Activated CD4-positive, alpha-beta memory T cell treated with anti-CD3 and anti-CD28 coated beads for 36 hours (primary cell): ENCODE measurements at regions of chr22 and their contacts with region 1.

Region 1: DNA sequence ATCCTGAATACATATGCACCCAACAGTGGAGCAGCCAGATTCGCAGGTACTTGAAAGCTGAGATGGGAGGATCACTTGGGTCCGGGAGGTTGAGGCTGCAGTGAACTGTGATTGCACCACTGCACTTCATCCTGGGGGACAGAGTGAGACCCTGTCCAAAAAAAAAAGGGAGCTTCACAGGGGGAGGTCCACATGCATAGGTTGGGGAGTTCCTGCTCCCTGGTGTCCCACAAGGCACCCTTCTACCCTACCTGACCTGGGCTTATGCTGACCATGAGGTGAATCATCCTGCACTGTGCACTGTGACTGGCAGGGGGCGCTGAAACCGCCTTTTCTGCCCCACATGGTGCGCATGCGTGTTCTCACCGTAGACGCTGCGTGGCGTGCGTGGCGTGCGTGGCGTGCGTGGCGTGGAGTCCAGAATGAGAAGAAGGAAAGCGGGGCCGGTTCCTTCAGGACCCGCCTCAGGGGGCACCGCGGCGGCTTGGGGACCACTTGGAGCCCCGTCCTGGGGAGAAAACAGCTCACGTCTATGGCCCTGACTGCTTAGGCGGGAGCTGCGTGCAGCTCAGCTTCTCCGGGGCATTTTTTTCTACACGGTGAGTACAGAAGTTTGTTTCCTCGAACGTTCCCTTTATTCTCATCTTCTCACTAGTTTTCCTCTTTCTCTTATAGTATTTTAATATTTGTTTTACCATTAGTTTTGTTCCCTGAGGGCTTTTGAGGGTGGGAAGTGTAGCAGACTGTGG is 116.6 kb upstream of the GRK3 start:
- DNase-seq: peak; percentile 94
- H3K4me3 Mint-ChIP-seq: peak overlapping the region; percentile 79
- H3K27ac Mint-ChIP-seq: peak overlapping the region; percentile 89
- H3K4me1 Mint-ChIP-seq: peaks cover 41% of the 10 kb centered on the region
- H3K27me3 Mint-ChIP-seq: no peaks in the 10 kb centered on the region

Region 2: GRCh38 chr22:25076336-25076735 is 371.5 kb before region 1 on chr22:
- CTCF ChIA-PET with region 1: no interaction called
- POLR2A ChIA-PET with region 1: no interaction called
- intact Hi-C with region 1: loop called (anchors 5 kb)
- DNase-seq: peak; percentile 85
- H3K4me3 Mint-ChIP-seq: peak overlapping the region; percentile 26
- H3K27ac Mint-ChIP-seq: peak overlapping the region; percentile 80
- H3K4me1 Mint-ChIP-seq: peaks cover 65% of the 10 kb centered on the region
- H3K27me3 Mint-ChIP-seq: no peaks in the 10 kb centered on the region

Region 3: GRCh38 chr22:25404928-25405816 is 42.7 kb before region 1 on chr22:
- CTCF ChIA-PET with region 1: interaction called, 3 read pairs
- POLR2A ChIA-PET with region 1: no interaction called
- intact Hi-C with region 1: loop called (anchors 5 kb)
- DNase-seq: peak; percentile 74
- H3K4me3 Mint-ChIP-seq: peak overlapping the region; percentile 70
- H3K27ac Mint-ChIP-seq: peak overlapping the region; percentile 33
- H3K4me1 Mint-ChIP-seq: peaks cover 18% of the 10 kb centered on the region
- H3K27me3 Mint-ChIP-seq: no peaks in the 10 kb centered on the region

Region 4: DNA sequence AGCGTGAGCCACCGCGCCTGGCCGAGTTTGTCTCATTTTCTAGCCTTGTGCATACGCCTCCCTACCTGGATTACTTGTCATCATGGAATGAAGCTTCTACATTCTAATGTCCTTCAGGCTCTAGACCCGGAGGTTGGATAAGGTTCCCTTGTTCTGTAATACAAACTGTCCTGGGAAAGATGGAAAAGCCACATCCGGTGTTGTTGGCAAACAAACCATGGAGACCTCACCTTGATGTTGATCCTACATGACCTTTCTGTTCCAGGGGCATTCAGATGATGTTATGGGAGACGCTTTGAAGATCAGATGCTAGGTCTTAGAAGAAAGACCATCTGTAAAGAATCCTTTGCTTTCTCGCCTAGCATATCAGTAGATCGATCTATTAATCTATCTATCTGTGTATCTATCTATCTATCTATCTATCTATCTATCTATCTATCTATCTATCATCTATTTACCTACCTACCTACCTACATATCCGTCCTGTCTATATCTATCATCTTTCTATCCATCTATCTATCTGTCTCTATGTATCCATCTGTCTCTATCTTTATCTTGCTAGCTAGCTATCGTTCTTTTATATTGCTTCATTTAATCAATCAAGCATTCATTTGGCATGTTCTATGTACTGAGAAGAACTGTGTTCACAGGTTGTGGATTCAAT is 70.3 kb after region 1 on chr22:
- CTCF ChIA-PET with region 1: no interaction called
- POLR2A ChIA-PET with region 1: no interaction called
- intact Hi-C with region 1: no loop called
- DNase-seq: no peak
- H3K4me3 Mint-ChIP-seq: no peak overlapping the region
- H3K27ac Mint-ChIP-seq: no peak overlapping the region
- H3K4me1 Mint-ChIP-seq: no peaks in the 10 kb centered on the region
- H3K27me3 Mint-ChIP-seq: no peaks in the 10 kb centered on the region

Region 5: DNA sequence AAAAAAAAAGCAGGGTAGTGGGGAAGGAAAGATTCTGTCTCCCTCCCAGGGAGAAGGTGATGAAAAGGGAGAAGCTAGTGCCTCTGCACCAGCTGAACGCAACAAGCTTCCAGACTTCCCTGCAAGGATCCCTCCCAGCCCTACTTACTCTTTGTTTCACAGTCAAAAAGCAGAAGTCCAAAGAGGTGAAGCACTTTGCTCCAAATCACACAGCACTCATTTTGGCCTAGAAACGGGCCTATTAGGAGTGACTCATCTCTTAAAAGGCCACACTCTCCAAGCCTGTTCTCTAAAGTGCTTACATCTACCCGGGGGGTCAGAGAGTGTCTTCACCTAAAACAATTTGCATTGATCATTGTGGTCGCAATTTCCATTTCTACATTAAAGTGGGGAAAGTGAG is 98.9 kb after region 1 on chr22:
- CTCF ChIA-PET with region 1: no interaction called
- POLR2A ChIA-PET with region 1: no interaction called
- intact Hi-C with region 1: no loop called
- DNase-seq: no peak
- H3K4me3 Mint-ChIP-seq: no peak overlapping the region
- H3K27ac Mint-ChIP-seq: no peak overlapping the region
- H3K4me1 Mint-ChIP-seq: no peaks in the 10 kb centered on the region
- H3K27me3 Mint-ChIP-seq: no peaks in the 10 kb centered on the region

Region 6: GRCh38 chr22:25702040-25702439 is 254.2 kb after region 1 on chr22:
- CTCF ChIA-PET with region 1: interaction called, 3 read pairs
- POLR2A ChIA-PET with region 1: no interaction called
- intact Hi-C with region 1: loop called (anchors 5 kb)
- DNase-seq: no peak
- H3K4me3 Mint-ChIP-seq: no peak overlapping the region
- H3K27ac Mint-ChIP-seq: no peak overlapping the region
- H3K4me1 Mint-ChIP-seq: peaks cover 13% of the 10 kb centered on the region
- H3K27me3 Mint-ChIP-seq: no peaks in the 10 kb centered on the region

Region 7: GRCh38 chr22:25772288-25772687 is 324.4 kb after region 1 on chr22:
- CTCF ChIA-PET with region 1: interaction called, 13 read pairs
- POLR2A ChIA-PET with region 1: no interaction called
- intact Hi-C with region 1: loop called (anchors 5 kb)
- DNase-seq: no peak
- H3K4me3 Mint-ChIP-seq: no peak overlapping the region
- H3K27ac Mint-ChIP-seq: no peak overlapping the region
- H3K4me1 Mint-ChIP-seq: peaks cover 9% of the 10 kb centered on the region
- H3K27me3 Mint-ChIP-seq: peaks cover 7% of the 10 kb centered on the region